Activated CD4-positive, alpha-beta memory T cell treated with anti-CD3 and anti-CD28 coated beads, Interleukin-2, amount 10 ng/mL, durations not matched to agents 7 days and 5 days (primary cell): ENCODE measurements at regions of chr5 and their contacts with region 1.

Region 1: GRCh38 chr5:151447174-151448037 is at the start of gene SLC36A1:
- DNase-seq: peak; percentile 93
- H3K4me3 Mint-ChIP-seq: peak within 1 kb of the TSS; percentile 95
- H3K27ac Mint-ChIP-seq: peak within 1 kb of the TSS; percentile 77
- H3K4me1 Mint-ChIP-seq: peaks cover 25% of the 10 kb centered on the region
- H3K27me3 Mint-ChIP-seq: peaks cover 29% of the 10 kb centered on the region
- total RNA-seq, gene SLC36A1: 5.4 to 6.4 TPM

Region 2: GRCh38 chr5:151338734-151339133 is 108.7 kb before region 1 on chr5:
- CTCF ChIA-PET with region 1: no interaction called
- POLR2A ChIA-PET with region 1: no interaction called
- DNase-seq: no peak
- H3K4me3 Mint-ChIP-seq: no peak overlapping the region
- H3K27ac Mint-ChIP-seq: no peak overlapping the region
- H3K4me1 Mint-ChIP-seq: peaks cover 7% of the 10 kb centered on the region
- H3K27me3 Mint-ChIP-seq: peaks cover 28% of the 10 kb centered on the region

Region 3: GRCh38 chr5:151432210-151432609 is 15.2 kb before region 1 on chr5:
- CTCF ChIA-PET with region 1: interaction called, 12 read pairs
- POLR2A ChIA-PET with region 1: interaction called, 3 read pairs
- DNase-seq: no peak
- H3K4me3 Mint-ChIP-seq: no peak overlapping the region
- H3K27ac Mint-ChIP-seq: no peak overlapping the region
- H3K4me1 Mint-ChIP-seq: no peaks in the 10 kb centered on the region
- H3K27me3 Mint-ChIP-seq: peaks cover 16% of the 10 kb centered on the region

Region 4: GRCh38 chr5:151461312-151461711 is 13.9 kb after region 1 on chr5:
- CTCF ChIA-PET with region 1: interaction called, 26 read pairs
- POLR2A ChIA-PET with region 1: interaction called, 4 read pairs
- DNase-seq: no peak
- H3K4me3 Mint-ChIP-seq: no peak overlapping the region
- H3K27ac Mint-ChIP-seq: no peak overlapping the region
- H3K4me1 Mint-ChIP-seq: peaks cover 4% of the 10 kb centered on the region
- H3K27me3 Mint-ChIP-seq: no peaks in the 10 kb centered on the region

Region 5: DNA sequence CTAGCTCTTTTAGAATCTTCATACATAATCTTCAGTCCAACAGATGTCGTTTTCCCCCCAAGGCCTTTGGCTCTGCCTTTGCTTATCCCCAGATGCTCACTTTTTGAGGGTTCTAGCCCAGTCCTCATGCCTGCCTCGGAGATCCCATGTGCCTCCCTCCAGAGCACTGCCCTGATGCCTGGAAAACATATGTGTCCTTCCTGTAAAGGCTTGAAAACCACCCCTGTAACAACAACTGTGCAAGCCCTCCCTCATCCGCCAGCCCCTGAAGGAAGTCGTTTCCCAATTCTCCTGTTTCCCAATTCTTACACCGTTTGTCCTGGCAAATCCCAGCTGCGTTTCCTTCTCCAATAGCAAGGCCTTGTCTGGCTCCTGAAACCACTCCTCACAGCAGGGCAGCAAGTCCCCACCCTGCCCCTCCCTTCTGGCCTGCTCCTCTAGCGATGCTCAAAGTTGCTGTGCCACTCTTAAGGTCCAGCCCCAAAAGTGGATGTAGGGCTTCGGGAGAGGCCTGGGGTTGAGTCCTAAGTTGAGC is 52.2 kb after region 1 on chr5:
- CTCF ChIA-PET with region 1: interaction called, 15 read pairs
- POLR2A ChIA-PET with region 1: no interaction called
- DNase-seq: no peak
- H3K4me3 Mint-ChIP-seq: no peak overlapping the region
- H3K27ac Mint-ChIP-seq: no peak overlapping the region
- H3K4me1 Mint-ChIP-seq: peaks cover 4% of the 10 kb centered on the region
- H3K27me3 Mint-ChIP-seq: no peaks in the 10 kb centered on the region

Region 6: GRCh38 chr5:151523335-151523734 is 75.9 kb after region 1 on chr5:
- CTCF ChIA-PET with region 1: interaction called, 29 read pairs
- POLR2A ChIA-PET with region 1: interaction called, 3 read pairs
- DNase-seq: peak; percentile 56
- H3K4me3 Mint-ChIP-seq: no peak overlapping the region
- H3K27ac Mint-ChIP-seq: no peak overlapping the region
- H3K4me1 Mint-ChIP-seq: no peaks in the 10 kb centered on the region
- H3K27me3 Mint-ChIP-seq: no peaks in the 10 kb centered on the region

Region 7: GRCh38 chr5:151651997-151652645 is 204.7 kb after region 1 on chr5:
- CTCF ChIA-PET with region 1: interaction called, 60 read pairs
- POLR2A ChIA-PET with region 1: interaction called, 6 read pairs
- DNase-seq: peak; percentile 72
- H3K4me3 Mint-ChIP-seq: no peak overlapping the region
- H3K27ac Mint-ChIP-seq: no peak overlapping the region
- H3K4me1 Mint-ChIP-seq: no peaks in the 10 kb centered on the region
- H3K27me3 Mint-ChIP-seq: peaks cover 9% of the 10 kb centered on the region